Activated CD8-positive, alpha-beta T cell treated with anti-CD3 and anti-CD28 coated beads, Interleukin-2, amount 10 ng/mL, durations not matched to agents 7 days and 5 days (primary cell): ENCODE measurements at regions of chr2 and their contacts with region 1.

Region 1: GRCh38 chr2:38643021-38643671 is 22.8 kb upstream of the GALM start:
- DNase-seq: no peak
- ATAC-seq: peak; percentile 17
- H3K4me3 Mint-ChIP-seq: no peak overlapping the region
- H3K27ac Mint-ChIP-seq: peak overlapping the region; percentile 92
- H3K4me1 Mint-ChIP-seq: peaks cover 40% of the 10 kb centered on the region
- H3K27me3 Mint-ChIP-seq: no peaks in the 10 kb centered on the region

Region 2: GRCh38 chr2:38474715-38475566 is 168.2 kb before region 1 on chr2:
- CTCF ChIA-PET with region 1: no interaction called
- POLR2A ChIA-PET with region 1: no interaction called
- DNase-seq: no peak
- ATAC-seq: no peak
- H3K4me3 Mint-ChIP-seq: no peak overlapping the region
- H3K27ac Mint-ChIP-seq: no peak overlapping the region
- H3K4me1 Mint-ChIP-seq: peaks cover 13% of the 10 kb centered on the region
- H3K27me3 Mint-ChIP-seq: peaks cover 11% of the 10 kb centered on the region

Region 3: GRCh38 chr2:38653715-38654527 is 10.8 kb after region 1 on chr2:
- CTCF ChIA-PET with region 1: interaction called, 13 read pairs
- POLR2A ChIA-PET with region 1: interaction called, 20 read pairs
- DNase-seq: peak; percentile 58
- ATAC-seq: peak; percentile 61
- H3K4me3 Mint-ChIP-seq: peak overlapping the region; percentile 52
- H3K27ac Mint-ChIP-seq: peak overlapping the region; percentile 92
- H3K4me1 Mint-ChIP-seq: peaks cover 61% of the 10 kb centered on the region
- H3K27me3 Mint-ChIP-seq: no peaks in the 10 kb centered on the region